A549 (cell line): ENCODE measurements at regions of chr5 and their contacts with region 1.

Region 1: DNA sequence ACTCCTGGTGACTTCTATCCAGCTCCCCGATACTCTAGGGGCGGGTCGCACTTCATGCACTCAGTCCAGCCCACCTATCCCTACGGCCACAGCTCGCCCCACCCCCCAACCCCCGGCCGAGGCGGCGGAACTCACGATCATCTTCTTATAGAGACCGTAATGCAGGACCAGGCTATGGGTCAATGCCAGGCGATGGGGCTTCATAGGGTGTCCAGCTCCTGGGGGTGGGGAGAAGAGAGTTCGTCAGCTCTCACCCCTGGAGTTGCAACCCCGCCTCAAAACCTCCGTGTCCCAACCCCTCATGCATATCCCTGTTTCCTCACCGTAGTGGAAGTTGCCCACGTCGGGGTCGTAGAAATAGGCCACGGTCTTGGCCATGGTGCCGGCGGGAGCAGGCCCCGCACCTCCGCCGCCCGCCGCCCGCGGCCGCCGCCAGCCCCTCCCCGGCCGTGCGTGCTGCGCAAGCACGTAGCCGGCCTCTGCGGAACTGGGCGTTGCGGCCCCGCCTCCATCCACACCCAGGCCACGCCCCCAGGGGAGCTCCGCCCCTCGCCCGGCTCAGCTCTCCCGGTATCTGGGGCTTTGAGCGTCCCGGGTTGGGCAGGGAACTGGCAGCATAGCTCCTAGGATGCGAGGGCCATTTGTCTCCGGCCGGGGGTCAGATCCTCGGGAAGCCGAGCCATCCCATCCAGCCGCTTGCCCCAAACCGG is at the starts of genes HDAC3 and RELL2:
- DNase-seq: peak; percentile 90 to 93
- ATAC-seq: peak; percentile 80 to 94
- H3K4me3 ChIP-seq: peak within 1 kb of the TSS; percentile 83
- H3K27ac ChIP-seq: peak within 1 kb of the TSS; percentile 85 to 92
- H3K4me1 ChIP-seq: peaks cover 18% of the 10 kb centered on the region
- CTCF ChIP-seq: no peak
- EP300 ChIP-seq: no peak
- POLR2A ChIP-seq: peak; percentile 94
- RAD21 ChIP-seq: no peak
- polyA plus RNA-seq, gene HDAC3: 67.3 and 80.0 TPM in 2 replicates
- polyA plus RNA-seq, gene RELL2: 2.8 and 3.6 TPM in 2 replicates

Region 2: GRCh38 chr5:141465351-141465750 is 171.2 kb before region 1 on chr5:
- CTCF ChIA-PET with region 1: no interaction called
- POLR2A ChIA-PET with region 1: no interaction called
- DNase-seq: no peak
- ATAC-seq: no peak
- H3K4me3 ChIP-seq: no peak overlapping the region
- H3K27ac ChIP-seq: no peak overlapping the region
- H3K4me1 ChIP-seq: no peaks in the 10 kb centered on the region
- CTCF ChIP-seq: no peak
- EP300 ChIP-seq: no peak
- POLR2A ChIP-seq: no peak
- RAD21 ChIP-seq: no peak

Region 3: DNA sequence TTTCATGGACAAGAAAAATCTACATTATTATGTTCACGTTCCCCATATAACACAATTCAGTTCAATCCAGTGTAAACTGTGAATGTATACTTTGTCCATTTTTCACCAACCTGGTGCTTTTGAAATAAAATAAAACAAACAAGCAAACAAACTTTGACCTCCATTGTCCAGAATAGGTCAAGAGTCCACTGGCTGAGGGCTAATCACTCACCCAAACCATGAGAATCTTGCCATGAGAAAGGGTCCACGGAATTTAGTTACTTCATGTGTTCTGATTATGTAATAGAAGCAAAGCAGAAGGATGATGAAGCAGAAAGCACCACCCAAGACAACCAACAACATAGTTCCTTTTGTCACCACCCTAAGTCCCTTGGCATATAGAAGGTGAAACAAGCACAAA is 46.4 kb before region 1 on chr5:
- CTCF ChIA-PET with region 1: interaction called, 303 read pairs
- POLR2A ChIA-PET with region 1: interaction called, 6 read pairs
- DNase-seq: no peak
- ATAC-seq: no peak
- H3K4me3 ChIP-seq: no peak overlapping the region
- H3K27ac ChIP-seq: no peak overlapping the region
- H3K4me1 ChIP-seq: 0 out of 3 replicates have a peak, but pooled peaks cover 6% of the 10 kb centered on the region
- CTCF ChIP-seq: no peak
- EP300 ChIP-seq: no peak
- POLR2A ChIP-seq: no peak
- RAD21 ChIP-seq: no peak

Region 4: DNA sequence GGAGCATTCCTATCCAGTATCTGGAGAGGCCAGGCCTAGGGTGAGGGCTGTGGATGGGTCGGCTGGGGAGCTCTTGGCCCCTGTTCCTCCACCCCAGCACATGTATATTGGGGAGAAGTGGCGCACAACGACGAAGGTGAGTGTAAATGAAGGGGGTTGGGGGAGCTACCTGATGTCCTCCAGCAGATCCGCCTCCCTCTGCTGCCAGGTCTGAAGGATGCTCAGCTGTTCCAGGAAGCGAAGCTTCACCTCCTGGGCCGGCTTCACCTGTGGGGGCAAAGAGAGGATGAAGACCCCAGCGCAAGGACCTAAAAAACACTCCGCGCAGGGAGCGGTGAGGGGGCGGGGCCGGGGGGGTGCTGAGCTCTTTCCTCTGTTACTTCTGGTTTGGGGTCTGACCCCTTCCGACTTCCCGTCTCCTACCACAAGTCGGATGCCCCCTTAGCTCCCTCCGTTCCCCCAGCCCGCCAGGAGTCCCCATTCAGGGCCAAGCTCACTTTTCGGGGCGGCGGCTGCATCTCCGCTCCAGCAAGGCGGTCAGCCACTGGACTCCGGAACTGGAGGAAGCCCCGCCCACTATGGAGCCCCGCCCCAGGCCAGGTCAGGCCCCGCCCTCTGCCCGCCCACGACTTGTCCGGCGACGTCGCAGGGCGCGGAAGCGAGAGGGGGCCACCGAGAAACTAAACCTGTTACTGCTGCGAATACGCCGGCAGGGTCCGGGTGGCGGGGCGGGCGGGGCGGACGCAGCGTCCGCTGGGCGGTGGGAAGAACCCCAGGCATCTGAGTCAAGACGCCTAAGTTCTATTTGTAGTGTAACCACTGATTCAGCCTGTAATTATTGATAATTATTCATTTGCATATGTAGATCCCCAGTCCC is 14.5 kb after region 1 on chr5 and contains the start of gene FCHSD1:
- CTCF ChIA-PET with region 1: interaction called, 22 read pairs
- POLR2A ChIA-PET with region 1: interaction called, 14 read pairs
- DNase-seq: peak; percentile 82 to 98
- ATAC-seq: peak; percentile 81 to 96
- H3K4me3 ChIP-seq: peak within 1 kb of the TSS; percentile 70
- H3K27ac ChIP-seq: peak within 1 kb of the TSS; percentile 61 to 90
- H3K4me1 ChIP-seq: peaks cover 4% of the 10 kb centered on the region; the same call in 1 of the 3 replicates
- CTCF ChIP-seq: no peak
- EP300 ChIP-seq: no peak
- POLR2A ChIP-seq: peak; percentile 59
- RAD21 ChIP-seq: no peak
- polyA plus RNA-seq, gene FCHSD1: 11.0 and 12.2 TPM in 2 replicates

Region 5: GRCh38 chr5:141883184-141883891 is 246.8 kb after region 1 on chr5:
- CTCF ChIA-PET with region 1: no interaction called
- POLR2A ChIA-PET with region 1: no interaction called
- DNase-seq: peak in 1 of 2 experiments; percentile 19
- ATAC-seq: no peak
- H3K4me3 ChIP-seq: no peak overlapping the region
- H3K27ac ChIP-seq: no peak overlapping the region
- H3K4me1 ChIP-seq: peaks cover 6% of the 10 kb centered on the region; the same call in 1 of the 3 replicates
- CTCF ChIP-seq: no peak
- EP300 ChIP-seq: no peak
- POLR2A ChIP-seq: no peak
- RAD21 ChIP-seq: no peak